ENCODE measurements at regions of chr14 and their contacts with region 1.

Region 1: DNA sequence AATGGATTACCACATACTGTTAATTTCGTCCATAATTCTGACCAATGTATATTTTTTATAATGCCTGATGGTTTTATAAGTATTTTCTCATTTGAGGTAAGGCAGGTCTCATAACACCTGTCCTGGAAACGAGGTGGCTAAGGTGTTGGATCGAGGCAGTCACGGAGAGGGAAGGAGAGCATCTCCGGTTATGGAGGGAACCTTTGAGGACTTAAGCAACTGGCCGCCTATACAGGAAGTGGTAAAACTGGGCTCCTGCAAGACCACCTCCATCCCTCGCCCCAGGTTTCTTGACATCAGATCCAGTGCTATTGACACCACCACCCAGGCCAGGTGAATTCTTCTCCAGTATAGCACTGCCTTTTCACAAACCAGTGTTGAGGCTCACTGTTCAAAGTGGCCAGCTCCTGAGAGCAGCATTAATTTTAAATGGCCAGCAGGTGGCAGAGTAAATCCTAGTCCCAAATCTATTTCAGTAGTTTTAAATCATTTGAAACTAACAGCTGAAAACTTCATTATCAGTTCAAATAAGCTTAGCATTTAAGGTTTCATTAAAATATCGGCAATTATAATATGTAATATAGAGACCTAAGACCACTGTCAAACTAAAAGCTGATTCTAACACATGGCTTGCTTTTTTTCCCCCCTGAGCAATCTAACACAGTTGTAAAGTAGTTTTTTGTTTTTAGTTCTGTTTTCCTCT is 100.8 kb downstream of the PPM1A start:
- DNase-seq: peak; percentile 39
- ATAC-seq: peak; percentile 90
- H3K4me3 ChIP-seq: no peak overlapping the region
- H3K27ac ChIP-seq: no peak overlapping the region
- H3K4me1 ChIP-seq: no peaks in the 10 kb centered on the region
- H3K27me3 ChIP-seq: no peaks in the 10 kb centered on the region
- CTCF ChIP-seq: peak; percentile 57 to 78 (median 64)
- POLR2A ChIP-seq: no peak
- RAD21 ChIP-seq: peak; percentile 65

Region 2: DNA sequence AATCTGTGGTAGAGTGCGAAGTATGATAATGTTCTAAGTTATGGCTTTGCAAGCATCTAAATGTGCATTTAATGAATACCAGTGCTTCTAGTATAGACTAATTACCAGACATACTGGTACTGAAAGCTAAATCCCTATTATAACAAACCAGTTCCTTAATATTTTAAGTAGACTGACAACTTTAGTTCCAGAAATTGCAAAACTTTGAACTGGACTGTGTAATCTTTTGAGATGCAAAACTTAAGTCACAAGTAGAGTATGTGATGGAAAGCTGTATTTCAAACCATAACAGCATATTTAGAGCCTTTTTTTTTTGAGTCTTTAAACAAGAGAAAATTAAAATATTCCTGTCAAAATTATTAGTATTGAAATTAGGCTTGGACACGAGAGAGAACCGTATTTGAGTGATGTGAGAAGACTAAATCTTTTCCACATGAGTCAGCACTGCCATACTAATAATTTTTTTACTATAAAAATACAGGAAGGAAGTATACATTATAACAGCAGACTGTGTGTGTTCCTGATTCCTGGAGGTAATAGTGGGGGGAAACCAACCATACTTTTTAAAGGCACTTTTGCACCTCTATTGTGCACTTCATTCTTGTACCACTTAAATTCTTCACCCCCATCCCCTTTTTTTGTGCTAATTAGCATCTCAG is 55.3 kb before region 1 on chr14:
- CTCF ChIA-PET with region 1: no interaction called
- POLR2A ChIA-PET with region 1: no interaction called
- RAD21 ChIA-PET with region 1: no interaction called
- intact Hi-C with region 1: no loop called
- DNase-seq: no peak
- ATAC-seq: no peak
- H3K4me3 ChIP-seq: no peak overlapping the region
- H3K27ac ChIP-seq: no peak overlapping the region
- H3K4me1 ChIP-seq: no peaks in the 10 kb centered on the region
- H3K27me3 ChIP-seq: no peaks in the 10 kb centered on the region
- CTCF ChIP-seq: no peak
- POLR2A ChIP-seq: no peak
- RAD21 ChIP-seq: no peak

Region 3: GRCh38 chr14:60331201-60332045 is 18.4 kb before region 1 on chr14:
- CTCF ChIA-PET with region 1: interaction called, 16 read pairs
- POLR2A ChIA-PET with region 1: no interaction called
- RAD21 ChIA-PET with region 1: no interaction called
- intact Hi-C with region 1: no loop called
- DNase-seq: peak; percentile 67
- ATAC-seq: peak; percentile 86
- H3K4me3 ChIP-seq: peak overlapping the region; percentile 47 to 55
- H3K27ac ChIP-seq: peak overlapping the region; percentile 56
- H3K4me1 ChIP-seq: peaks cover 3 to 11% of the 10 kb centered on the region in 2 experiments; a peak in 2 of 4 replicates
- H3K27me3 ChIP-seq: no peaks in the 10 kb centered on the region
- CTCF ChIP-seq: peak; percentile 69 to 91 (median 80); a peak in 5 of 6 replicates
- POLR2A ChIP-seq: no peak
- RAD21 ChIP-seq: peak; percentile 63

Region 4: GRCh38 chr14:60485598-60486251 is 135.9 kb after region 1 on chr14 and contains the start of gene C14orf39:
- CTCF ChIA-PET with region 1: interaction called, 5 read pairs
- POLR2A ChIA-PET with region 1: no interaction called
- RAD21 ChIA-PET with region 1: no interaction called
- intact Hi-C with region 1: loop called (anchors 1 kb)
- DNase-seq: no peak
- ATAC-seq: no peak
- H3K4me3 ChIP-seq: no peak within 1 kb of the TSS
- H3K27ac ChIP-seq: no peak within 1 kb of the TSS
- H3K4me1 ChIP-seq: no peaks in the 10 kb centered on the region; a peak in 1 of 4 replicates
- H3K27me3 ChIP-seq: no peaks in the 10 kb centered on the region
- CTCF ChIP-seq: no peak
- POLR2A ChIP-seq: no peak
- RAD21 ChIP-seq: no peak
- total RNA-seq, gene C14orf39: not detected

Measured in HCT116 (cell line).